ENCODE measurements at regions of chr9 and their contacts with region 1.

Region 1: DNA sequence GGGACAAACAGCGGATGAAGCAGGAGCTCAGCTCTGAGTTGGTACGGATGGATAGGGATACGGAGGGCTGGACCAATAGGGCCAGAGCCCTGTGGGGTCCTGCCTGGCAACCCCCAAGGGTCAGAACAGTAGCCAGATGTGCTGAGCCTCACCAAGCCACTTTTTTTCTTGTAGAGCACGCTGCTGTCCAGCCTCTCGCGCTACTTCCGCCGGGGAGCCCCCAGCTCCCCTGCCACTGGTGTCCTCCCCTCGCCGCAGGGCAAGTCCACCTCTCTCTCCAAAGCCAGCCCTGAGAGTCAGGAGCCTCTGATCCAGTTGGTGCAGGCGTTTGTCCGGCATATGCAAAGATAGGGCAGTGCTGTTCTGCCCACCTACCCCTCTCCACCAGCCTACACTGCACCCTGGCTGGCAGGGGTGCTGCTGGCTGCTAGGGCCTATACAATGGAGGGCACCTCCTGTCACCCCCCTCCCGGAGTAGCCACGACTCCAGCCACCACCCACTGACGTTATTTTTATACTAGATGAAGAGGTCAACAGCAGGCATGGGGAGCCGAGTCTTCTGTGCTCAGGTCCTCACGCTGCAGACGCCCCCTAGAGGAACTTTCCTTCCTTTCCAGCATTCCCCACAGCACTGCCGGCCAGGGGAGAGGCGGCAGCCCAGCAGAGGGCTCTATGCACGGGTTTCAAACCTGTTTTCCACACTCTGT is 21.6 kb downstream of the SH3GLB2 start:
- DNase-seq: peak in 1 of 2 donors; percentile 86
- H3K4me3 ChIP-seq: no peak overlapping the region
- H3K27ac ChIP-seq: peak overlapping the region; percentile 61 to 70
- H3K4me1 ChIP-seq: peaks cover 0 to 18% of the 10 kb centered on the region in 2 donors
- H3K27me3 ChIP-seq: no peaks in the 10 kb centered on the region
- CTCF ChIP-seq: peak; percentile 76 to 88 (median 76)

Region 2: DNA sequence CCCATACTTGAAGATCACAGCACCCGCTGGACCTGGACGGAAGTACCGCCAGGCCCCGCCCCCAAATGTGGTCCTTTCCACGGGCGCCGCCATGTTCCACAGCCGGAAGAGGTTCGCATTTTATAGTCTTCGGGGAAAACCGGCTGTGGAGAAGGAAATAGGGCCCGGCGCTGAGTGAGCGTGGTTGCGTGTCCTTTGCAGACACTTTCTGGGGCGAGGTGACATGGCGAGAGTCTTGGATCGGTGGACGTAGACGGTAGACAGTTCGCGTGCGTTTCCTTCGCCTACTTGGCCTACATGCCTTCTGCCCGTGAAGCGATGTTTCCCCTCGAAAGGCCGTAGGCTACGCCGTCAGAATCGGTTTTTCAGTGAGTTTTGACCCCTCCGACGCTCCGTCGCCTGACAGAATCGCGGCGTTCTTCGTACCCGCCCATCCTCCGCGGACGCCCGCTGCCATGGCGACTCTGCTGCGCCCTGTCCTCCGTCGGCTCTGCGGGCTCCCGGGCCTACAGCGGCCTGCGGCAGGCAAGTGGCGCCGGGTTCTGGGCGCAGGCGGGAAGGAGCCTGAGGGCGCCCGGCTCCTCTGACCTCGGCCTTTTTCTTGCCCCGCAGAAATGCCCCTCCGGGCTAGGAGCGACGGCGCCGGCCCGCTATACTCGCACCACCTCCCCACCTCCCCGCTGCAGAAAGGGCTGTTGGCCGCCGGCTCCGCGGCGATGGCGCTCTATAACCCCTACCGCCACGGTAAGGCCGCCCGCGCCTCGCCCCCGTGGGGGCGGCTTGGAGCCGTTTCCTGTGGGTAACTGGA is 683.9 kb before region 1 on chr9 and contains the starts of genes COQ4 and TRUB2:
- intact Hi-C with region 1: no loop called
- DNase-seq: peak; percentile 72 to 97
- H3K4me3 ChIP-seq: peak within 1 kb of the TSS; percentile 72 to 76
- H3K27ac ChIP-seq: peak within 1 kb of the TSS; percentile 82 to 85
- H3K4me1 ChIP-seq: peaks cover 11 to 17% of the 10 kb centered on the region in 2 donors
- H3K27me3 ChIP-seq: no peaks in the 10 kb centered on the region
- CTCF ChIP-seq: no peak
- total RNA-seq, gene COQ4: 11.4 TPM
- total RNA-seq, gene TRUB2: 10.2 TPM

Region 3: GRCh38 chr9:128987805-128988204 is 18.7 kb before region 1 on chr9:
- intact Hi-C with region 1: loop called (anchors 2 kb)
- DNase-seq: peak in 1 of 2 donors; percentile 88
- H3K4me3 ChIP-seq: peak overlapping the region in 1 of 2 donors; percentile 31
- H3K27ac ChIP-seq: peak overlapping the region; percentile 52 to 67
- H3K4me1 ChIP-seq: peaks cover 0 to 7% of the 10 kb centered on the region in 2 donors
- H3K27me3 ChIP-seq: no peaks in the 10 kb centered on the region
- CTCF ChIP-seq: no peak